ENCODE measurements at regions of chr6 and their contacts with region 1.

Region 1: GRCh38 chr6:70706491-70707123 is 38.9 kb downstream of the SMAP1 start:
- DNase-seq: no peak
- H3K4me3 ChIP-seq: no peak overlapping the region
- H3K27ac ChIP-seq: no peak overlapping the region
- H3K4me1 ChIP-seq: no peaks in the 10 kb centered on the region
- H3K27me3 ChIP-seq: no peaks in the 10 kb centered on the region
- CTCF ChIP-seq: peak; percentile 31 to 59 (median 45)
- POLR2A ChIP-seq: no peak

Region 2: GRCh38 chr6:70886661-70887060 is 180.1 kb after region 1 on chr6:
- intact Hi-C with region 1: loop called (anchors 5 kb)
- DNase-seq: no peak
- H3K4me3 ChIP-seq: no peak overlapping the region
- H3K27ac ChIP-seq: no peak overlapping the region
- H3K4me1 ChIP-seq: no peaks in the 10 kb centered on the region
- H3K27me3 ChIP-seq: no peaks in the 10 kb centered on the region
- CTCF ChIP-seq: no peak
- POLR2A ChIP-seq: no peak

Measured in vagina (tissue), 2 donors.